IMR-90 (cell line): ENCODE measurements at regions of chr16 and their contacts with region 1.

Region 1: GRCh38 chr16:1492923-1493745 is at the start of gene TELO2:
- DNase-seq: peak; percentile 70
- ATAC-seq: peak; percentile 92
- H3K4me3 ChIP-seq: peak within 1 kb of the TSS; percentile 65
- H3K27ac ChIP-seq: peak within 1 kb of the TSS; percentile 96
- H3K4me1 ChIP-seq: peaks cover 12% of the 10 kb centered on the region
- H3K27me3 ChIP-seq: no peaks in the 10 kb centered on the region
- CTCF ChIP-seq: no peak
- POLR2A ChIP-seq: no peak; the same call in 1 of the 2 replicates
- RAD21 ChIP-seq: no peak
- total RNA-seq, gene TELO2: 5.8 and 6.6 TPM in 2 replicates

Region 2: DNA sequence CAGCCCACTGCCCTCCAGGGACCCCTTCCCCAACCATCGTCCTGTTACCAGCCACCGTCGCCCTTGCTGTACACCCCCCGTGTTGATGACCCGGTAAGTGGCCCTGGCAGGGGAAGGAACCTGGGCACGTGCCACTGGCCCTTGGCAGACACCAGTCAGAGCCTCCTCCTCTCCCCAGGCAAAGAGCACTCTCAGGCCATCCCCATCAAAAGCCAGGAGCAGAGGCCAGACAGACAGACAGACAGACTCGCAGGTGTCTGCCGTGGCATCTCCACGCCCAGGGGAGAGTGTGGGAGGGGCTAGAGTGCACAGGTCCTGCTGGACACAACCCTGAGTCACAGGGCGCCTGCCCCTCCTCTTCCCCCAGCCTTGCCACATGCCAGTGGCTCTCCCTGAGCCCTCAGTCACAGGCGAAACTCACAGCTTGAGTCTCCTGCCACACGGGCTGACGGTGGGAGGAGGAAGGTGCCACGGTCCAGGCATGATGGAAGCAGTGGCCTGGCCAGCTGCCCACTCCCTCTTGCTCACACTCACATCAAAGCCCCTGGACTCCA is 26.1 kb before region 1 on chr16:
- CTCF ChIA-PET with region 1: no interaction called
- POLR2A ChIA-PET with region 1: no interaction called
- dilution Hi-C with region 1: no loop called
- in situ Hi-C with region 1: no loop called
- intact Hi-C with region 1: no loop called
- DNase-seq: peak; percentile 4
- ATAC-seq: no peak
- H3K4me3 ChIP-seq: no peak overlapping the region
- H3K27ac ChIP-seq: no peak overlapping the region
- H3K4me1 ChIP-seq: 0 out of 2 replicates have a peak, but pooled peaks cover 2% of the 10 kb centered on the region
- H3K27me3 ChIP-seq: no peaks in the 10 kb centered on the region
- CTCF ChIP-seq: no peak
- POLR2A ChIP-seq: no peak
- RAD21 ChIP-seq: no peak

Region 3: GRCh38 chr16:1518626-1519135 is 25.5 kb after region 1 on chr16:
- CTCF ChIA-PET with region 1: no interaction called
- POLR2A ChIA-PET with region 1: no interaction called
- dilution Hi-C with region 1: no loop called
- in situ Hi-C with region 1: no loop called
- intact Hi-C with region 1: no loop called
- DNase-seq: no peak
- ATAC-seq: no peak
- H3K4me3 ChIP-seq: no peak overlapping the region
- H3K27ac ChIP-seq: no peak overlapping the region
- H3K4me1 ChIP-seq: no peaks in the 10 kb centered on the region
- H3K27me3 ChIP-seq: no peaks in the 10 kb centered on the region
- CTCF ChIP-seq: no peak
- POLR2A ChIP-seq: no peak
- RAD21 ChIP-seq: no peak

Region 4: GRCh38 chr16:1610276-1611017 is 117.3 kb after region 1 on chr16:
- CTCF ChIA-PET with region 1: no interaction called
- POLR2A ChIA-PET with region 1: no interaction called
- dilution Hi-C with region 1: no loop called
- in situ Hi-C with region 1: no loop called
- intact Hi-C with region 1: loop called (anchors 5 kb)
- DNase-seq: peak; percentile 73
- ATAC-seq: peak; percentile 69
- H3K4me3 ChIP-seq: peak overlapping the region; percentile 73
- H3K27ac ChIP-seq: peak overlapping the region; percentile 56
- H3K4me1 ChIP-seq: peaks cover 7% of the 10 kb centered on the region; the same call in 1 of the 2 replicates
- H3K27me3 ChIP-seq: no peaks in the 10 kb centered on the region
- CTCF ChIP-seq: no peak
- POLR2A ChIP-seq: peak; percentile 47
- RAD21 ChIP-seq: no peak